Ascending aorta (tissue), 2 donors: ENCODE measurements at regions of chr17 and their contacts with region 1.

Region 1: GRCh38 chr17:11074451-11074850 is 166.6 kb upstream of the SHISA6 start:
- DNase-seq: no peak
- H3K4me3 ChIP-seq: no peak overlapping the region
- H3K27ac ChIP-seq: no peak overlapping the region
- H3K4me1 ChIP-seq: no peaks in the 10 kb centered on the region
- H3K27me3 ChIP-seq: no peaks in the 10 kb centered on the region
- CTCF ChIP-seq: no peak

Region 2: GRCh38 chr17:11023639-11024479 is 50.6 kb before region 1 on chr17:
- intact Hi-C with region 1: loop called (anchors 5 kb)
- DNase-seq: no peak
- H3K4me3 ChIP-seq: no peak overlapping the region
- H3K27ac ChIP-seq: no peak overlapping the region
- H3K4me1 ChIP-seq: no peaks in the 10 kb centered on the region
- H3K27me3 ChIP-seq: no peaks in the 10 kb centered on the region
- CTCF ChIP-seq: no peak

Region 3: DNA sequence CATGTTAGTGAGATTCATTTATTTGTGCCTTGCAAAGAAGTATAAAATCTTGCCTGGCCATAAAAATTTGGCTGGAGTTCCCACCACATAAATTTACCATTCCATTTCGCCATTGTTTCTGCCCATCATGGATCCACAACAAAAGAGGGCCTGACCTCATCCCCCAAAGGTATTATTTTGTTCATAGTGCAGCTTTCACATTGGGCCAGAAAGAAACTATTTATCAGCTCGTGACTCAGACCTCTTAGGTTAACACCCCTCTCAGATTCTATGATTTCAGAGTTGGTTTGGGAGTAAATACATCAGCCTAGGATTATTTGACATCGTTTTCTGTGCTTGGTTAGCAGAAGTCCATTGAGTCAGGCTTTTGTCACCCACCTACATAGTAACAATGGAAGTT is 274.7 kb after region 1 on chr17:
- intact Hi-C with region 1: no loop called
- DNase-seq: no peak
- H3K4me3 ChIP-seq: no peak overlapping the region
- H3K27ac ChIP-seq: no peak overlapping the region
- H3K4me1 ChIP-seq: no peaks in the 10 kb centered on the region
- H3K27me3 ChIP-seq: no peaks in the 10 kb centered on the region
- CTCF ChIP-seq: no peak